Natural killer cell (primary cell): ENCODE measurements at regions of chr19 and their contacts with region 1.

Region 1: DNA sequence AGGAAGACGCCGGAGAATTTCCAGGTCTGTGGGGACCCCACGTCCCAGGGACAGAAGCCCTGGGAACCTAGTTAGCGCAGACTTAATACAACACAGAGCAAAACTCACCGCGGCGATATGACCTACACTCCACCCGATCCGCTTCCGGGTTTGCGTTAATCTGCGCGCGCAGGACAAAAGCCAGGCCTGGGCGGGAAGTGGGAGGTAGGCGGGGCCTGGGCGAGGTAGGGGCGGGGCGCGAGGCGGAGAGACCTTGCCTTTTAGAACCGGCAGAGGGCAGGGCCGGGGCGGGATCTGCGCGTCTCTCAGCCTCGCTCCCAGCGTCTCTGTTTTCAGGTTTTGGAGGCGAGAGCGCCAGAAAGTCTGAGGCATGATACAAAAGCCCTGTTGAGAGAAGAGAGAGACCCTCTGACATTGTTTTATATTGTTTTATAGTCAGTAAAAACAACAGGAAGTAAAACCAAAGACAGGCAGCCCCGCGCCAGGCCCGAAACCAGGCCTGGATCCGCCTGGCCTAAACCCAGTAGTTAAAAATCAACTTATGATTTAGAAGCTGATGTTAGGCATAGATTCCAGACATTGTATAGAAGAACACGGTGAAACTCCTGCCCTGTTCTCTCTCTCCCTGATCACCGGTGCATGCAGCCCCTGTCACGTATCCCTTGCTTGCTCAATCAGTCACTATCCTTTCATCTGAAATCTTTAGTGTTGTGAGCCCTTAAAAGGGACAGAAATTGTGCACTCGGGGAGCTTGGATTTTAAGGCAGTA is at the start of gene ZNF611:
- DNase-seq: peak; percentile 99 to 100
- ATAC-seq: peak; percentile 95 to 99 (median 98)
- H3K4me3 ChIP-seq: peak within 1 kb of the TSS; percentile 92
- H3K4me3 Mint-ChIP-seq: peak within 1 kb of the TSS; percentile 91
- H3K27ac ChIP-seq: peak within 1 kb of the TSS; percentile 88
- H3K27ac Mint-ChIP-seq: peak within 1 kb of the TSS; percentile 68 to 81
- H3K4me1 ChIP-seq: peaks cover 21% of the 10 kb centered on the region
- H3K4me1 Mint-ChIP-seq: peaks cover 21 to 22% of the 10 kb centered on the region in 2 donors
- H3K27me3 ChIP-seq: no peaks in the 10 kb centered on the region
- H3K27me3 Mint-ChIP-seq: no peaks in the 10 kb centered on the region
- CTCF ChIP-seq: peak; percentile 68
- total RNA-seq, gene ZNF611: 41.2 to 58.0 (median 44.2) TPM

Region 2: DNA sequence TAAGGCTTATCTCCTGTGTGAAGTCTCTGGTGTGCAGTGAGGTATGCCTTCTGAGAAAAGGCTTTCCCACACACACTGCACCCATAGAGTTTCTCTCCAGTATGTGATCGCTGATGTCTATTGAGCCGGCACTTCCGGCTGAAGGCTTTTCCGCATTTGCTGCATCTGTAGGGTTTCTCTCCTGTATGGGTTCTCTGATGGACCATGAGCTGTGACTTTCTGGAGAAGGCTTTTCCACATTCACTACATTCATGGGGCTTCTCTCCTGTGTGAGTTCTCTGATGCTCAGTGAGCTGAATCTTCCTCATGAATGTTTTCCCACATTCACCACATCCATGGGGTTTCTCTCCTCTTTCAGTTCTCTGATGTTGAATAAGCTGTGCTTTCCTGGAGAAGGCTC is 862.0 kb before region 1 on chr19:
- intact Hi-C with region 1: no loop called
- DNase-seq: no peak
- ATAC-seq: no peak
- H3K4me3 ChIP-seq: no peak overlapping the region
- H3K4me3 Mint-ChIP-seq: no peak overlapping the region
- H3K27ac ChIP-seq: no peak overlapping the region
- H3K27ac Mint-ChIP-seq: no peak overlapping the region
- H3K4me1 ChIP-seq: no peaks in the 10 kb centered on the region
- H3K4me1 Mint-ChIP-seq: no peaks in the 10 kb centered on the region
- H3K27me3 ChIP-seq: no peaks in the 10 kb centered on the region
- H3K27me3 Mint-ChIP-seq: no peaks in the 10 kb centered on the region
- CTCF ChIP-seq: no peak

Region 3: DNA sequence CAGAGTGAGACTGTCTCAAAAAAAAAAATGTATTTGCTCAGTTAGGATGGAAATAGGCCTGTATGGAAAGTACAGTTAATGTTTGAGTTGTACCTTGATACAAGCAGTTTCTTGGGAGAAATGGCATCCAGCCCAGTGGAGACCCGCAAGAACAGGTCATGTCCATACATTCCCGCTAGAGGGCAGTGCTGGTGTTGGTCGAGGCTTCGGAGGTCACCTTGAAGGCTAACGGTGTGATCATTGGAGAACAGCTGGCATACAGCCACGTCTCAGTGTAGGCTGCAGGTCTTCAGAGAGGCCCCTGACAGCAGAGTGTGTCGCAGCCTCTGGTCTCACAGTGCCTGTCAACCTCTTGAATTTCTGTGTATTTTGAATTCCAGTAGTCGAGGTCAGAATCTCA is 391.5 kb before region 1 on chr19:
- intact Hi-C with region 1: no loop called
- DNase-seq: peak; percentile 45 to 77
- ATAC-seq: peak; percentile 72 to 95 (median 91)
- H3K4me3 ChIP-seq: no peak overlapping the region
- H3K4me3 Mint-ChIP-seq: no peak overlapping the region
- H3K27ac ChIP-seq: no peak overlapping the region
- H3K27ac Mint-ChIP-seq: no peak overlapping the region
- H3K4me1 ChIP-seq: peaks cover 3% of the 10 kb centered on the region
- H3K4me1 Mint-ChIP-seq: peaks cover 0 to 5% of the 10 kb centered on the region in 2 donors
- H3K27me3 ChIP-seq: no peaks in the 10 kb centered on the region
- H3K27me3 Mint-ChIP-seq: no peaks in the 10 kb centered on the region
- CTCF ChIP-seq: peak; percentile 63

Region 4: DNA sequence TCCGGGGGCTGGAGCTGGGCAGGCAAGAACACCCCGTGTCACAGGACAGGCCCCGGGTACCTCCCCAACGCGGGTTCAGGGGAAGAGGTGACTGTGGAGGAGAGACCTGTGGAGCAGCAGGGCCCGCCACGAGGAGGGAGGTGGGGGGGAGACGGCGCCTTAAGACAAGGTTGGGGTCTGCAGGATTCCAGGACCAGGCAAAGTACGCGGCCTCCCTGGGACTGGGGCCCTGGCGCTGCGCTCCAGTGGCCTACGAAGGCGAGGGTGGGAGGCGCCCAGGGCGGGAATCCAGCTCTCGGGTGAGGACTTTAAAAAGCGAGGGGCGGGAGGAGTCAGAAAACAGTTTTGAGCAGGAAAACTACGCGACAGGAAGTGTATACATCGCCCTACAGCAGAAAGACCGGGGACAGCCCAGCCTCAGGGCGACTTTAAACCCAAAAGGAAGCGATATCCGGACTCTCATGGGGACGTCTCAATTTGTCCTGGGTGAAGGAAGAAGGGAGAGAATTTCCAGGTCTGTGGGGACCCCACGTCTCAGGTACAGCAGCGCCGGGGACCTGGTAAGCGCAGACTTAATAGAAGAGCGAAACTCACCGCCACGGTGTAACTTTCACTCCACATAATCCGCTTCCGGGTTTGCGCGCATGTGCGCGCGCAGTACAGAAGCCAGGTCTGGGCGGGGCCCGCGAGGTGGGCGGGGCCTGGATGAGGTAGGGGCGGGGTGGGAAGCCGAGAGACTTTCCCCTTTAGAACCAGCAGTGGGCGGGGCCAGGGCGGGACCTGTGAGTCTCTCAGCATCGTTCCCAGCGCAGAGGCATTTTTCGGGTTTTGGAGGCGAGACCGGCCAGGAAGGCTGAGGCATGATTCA is 97.1 kb before region 1 on chr19 and contains the start of gene ZNF83:
- intact Hi-C with region 1: loop called (anchors 2 kb)
- DNase-seq: peak; percentile 97
- ATAC-seq: peak; percentile 94 to 99 (median 94)
- H3K4me3 ChIP-seq: peak within 1 kb of the TSS; percentile 57
- H3K4me3 Mint-ChIP-seq: peak within 1 kb of the TSS; percentile 97
- H3K27ac ChIP-seq: peak within 1 kb of the TSS; percentile 82
- H3K27ac Mint-ChIP-seq: peak within 1 kb of the TSS; percentile 96 to 97
- H3K4me1 ChIP-seq: peaks cover 17% of the 10 kb centered on the region
- H3K4me1 Mint-ChIP-seq: peaks cover 28 to 30% of the 10 kb centered on the region in 2 donors
- H3K27me3 ChIP-seq: no peaks in the 10 kb centered on the region
- H3K27me3 Mint-ChIP-seq: no peaks in the 10 kb centered on the region
- CTCF ChIP-seq: no peak
- total RNA-seq, gene ZNF83: 46.8 to 114 (median 96.9) TPM

Region 5: GRCh38 chr19:52786457-52787359 is 51.6 kb after region 1 on chr19 and contains the start of gene ZNF600:
- intact Hi-C with region 1: loop called (anchors 2 kb)
- DNase-seq: peak; percentile 81
- ATAC-seq: peak; percentile 97 to 98 (median 97)
- H3K4me3 ChIP-seq: peak within 1 kb of the TSS; percentile 88
- H3K4me3 Mint-ChIP-seq: peak within 1 kb of the TSS; percentile 92
- H3K27ac ChIP-seq: peak within 1 kb of the TSS; percentile 70
- H3K27ac Mint-ChIP-seq: peak within 1 kb of the TSS; percentile 57 to 88
- H3K4me1 ChIP-seq: peaks cover 50% of the 10 kb centered on the region
- H3K4me1 Mint-ChIP-seq: peaks cover 53 to 58% of the 10 kb centered on the region in 2 donors
- H3K27me3 ChIP-seq: no peaks in the 10 kb centered on the region
- H3K27me3 Mint-ChIP-seq: no peaks in the 10 kb centered on the region
- CTCF ChIP-seq: no peak
- total RNA-seq, gene ZNF600: 28.8 to 157 (median 73.1) TPM